ENCODE measurements at regions of chr3 and their contacts with region 1.

Region 1: DNA sequence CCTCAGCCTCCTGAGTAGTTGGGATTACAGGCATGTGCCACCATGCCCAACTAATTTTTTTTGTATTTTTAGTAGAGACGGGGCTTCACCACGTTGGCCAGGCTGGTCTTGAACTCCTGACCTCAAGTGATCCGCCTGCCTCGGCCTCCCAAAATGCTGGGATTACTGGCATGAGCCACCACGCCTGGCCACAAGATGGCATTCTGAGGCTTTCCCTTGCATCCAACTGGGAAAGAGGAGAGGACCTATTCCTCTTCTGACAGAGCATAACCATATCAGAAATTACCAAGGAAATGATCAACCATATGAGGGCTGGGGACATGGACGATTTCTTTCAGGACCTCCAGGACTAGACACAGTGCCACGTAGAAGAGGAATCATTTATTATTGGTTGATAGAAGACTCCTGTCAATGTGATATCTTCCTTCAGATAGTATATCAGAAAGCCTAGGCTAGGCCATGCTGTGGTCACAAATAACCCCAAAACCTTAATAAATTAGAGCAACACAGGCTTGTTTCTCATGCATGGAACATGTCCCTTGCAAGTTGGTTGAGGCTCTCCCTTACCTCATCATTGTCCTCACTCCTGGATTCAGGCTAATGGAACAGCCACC is 372.3 kb upstream of the IL12A start:
- DNase-seq: no peak
- H3K4me3 ChIP-seq: no peak overlapping the region
- H3K27ac ChIP-seq: no peak overlapping the region
- H3K4me1 ChIP-seq: peaks cover 0 to 9% (median 2%) of the 10 kb centered on the region in 4 donors
- H3K27me3 ChIP-seq: no peaks in the 10 kb centered on the region
- CTCF ChIP-seq: peak; percentile 62 to 78 (median 77)
- EP300 ChIP-seq: no peak
- POLR2A ChIP-seq: no peak

Region 2: DNA sequence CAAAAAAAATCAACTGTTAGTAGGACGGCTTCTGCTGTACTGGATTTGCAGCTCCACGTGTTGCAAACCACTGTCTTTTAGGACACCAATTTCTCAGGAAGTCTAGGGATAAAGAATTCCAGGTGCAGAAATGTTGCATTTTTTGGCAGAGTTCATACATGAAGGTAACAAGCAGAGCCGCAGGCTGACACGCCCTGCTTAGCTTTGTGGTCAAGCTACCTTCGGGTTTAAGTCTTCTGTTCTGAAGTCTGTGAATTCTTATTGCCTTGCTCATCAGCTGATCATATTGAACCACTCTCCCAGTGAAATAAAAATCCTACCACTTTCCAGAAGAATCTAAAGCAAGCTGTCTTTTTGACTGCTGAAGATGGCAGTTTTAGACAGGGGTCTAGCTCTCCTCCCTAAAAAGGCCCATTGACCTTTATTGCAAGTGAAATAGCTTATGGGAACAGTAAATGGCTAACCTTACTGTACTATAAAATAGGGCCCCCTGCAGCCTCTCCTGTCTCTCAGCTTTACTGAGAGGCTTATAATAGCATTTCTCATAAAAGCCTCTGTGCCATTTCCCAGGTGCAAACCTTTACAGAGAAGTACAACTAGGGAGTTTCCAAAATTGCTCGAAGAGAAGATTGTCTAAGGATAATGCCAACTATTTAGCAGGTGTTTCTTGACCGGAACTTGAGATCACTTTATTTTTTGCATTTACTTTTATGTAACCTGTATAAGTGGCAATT is 110.1 kb after region 1 on chr3:
- intact Hi-C with region 1: loop called (anchors 5 kb)
- DNase-seq: no peak
- H3K4me3 ChIP-seq: no peak overlapping the region
- H3K27ac ChIP-seq: no peak overlapping the region
- H3K4me1 ChIP-seq: peaks cover 0 to 4% (median under 1%) of the 10 kb centered on the region in 4 donors
- H3K27me3 ChIP-seq: no peaks in the 10 kb centered on the region
- CTCF ChIP-seq: no peak
- EP300 ChIP-seq: no peak
- POLR2A ChIP-seq: no peak

Region 3: GRCh38 chr3:159763602-159764489 is 147.5 kb after region 1 on chr3:
- intact Hi-C with region 1: loop called (anchors 5 kb)
- DNase-seq: no peak
- H3K4me3 ChIP-seq: peak overlapping the region; percentile 84 to 95 (median 84)
- H3K27ac ChIP-seq: peak overlapping the region; percentile 97 to 100 (median 98)
- H3K4me1 ChIP-seq: peaks cover 44 to 61% (median 58%) of the 10 kb centered on the region in 4 donors
- H3K27me3 ChIP-seq: no peaks in the 10 kb centered on the region
- CTCF ChIP-seq: peak in 2 of 3 experiments; percentile 22 to 49
- EP300 ChIP-seq: peak; percentile 23
- POLR2A ChIP-seq: no peak

Region 4: GRCh38 chr3:159804726-159805410 is 188.5 kb after region 1 on chr3:
- intact Hi-C with region 1: loop called (anchors 2 kb)
- DNase-seq: peak; percentile 92
- H3K4me3 ChIP-seq: peak overlapping the region in 2 of 4 donors; percentile 9 to 22
- H3K27ac ChIP-seq: peak overlapping the region; percentile 62 to 90 (median 84)
- H3K4me1 ChIP-seq: peaks cover 45 to 88% (median 85%) of the 10 kb centered on the region in 4 donors
- H3K27me3 ChIP-seq: no peaks in the 10 kb centered on the region
- CTCF ChIP-seq: peak; percentile 82 to 91 (median 89)
- EP300 ChIP-seq: peak; percentile 59
- POLR2A ChIP-seq: no peak

Region 5: DNA sequence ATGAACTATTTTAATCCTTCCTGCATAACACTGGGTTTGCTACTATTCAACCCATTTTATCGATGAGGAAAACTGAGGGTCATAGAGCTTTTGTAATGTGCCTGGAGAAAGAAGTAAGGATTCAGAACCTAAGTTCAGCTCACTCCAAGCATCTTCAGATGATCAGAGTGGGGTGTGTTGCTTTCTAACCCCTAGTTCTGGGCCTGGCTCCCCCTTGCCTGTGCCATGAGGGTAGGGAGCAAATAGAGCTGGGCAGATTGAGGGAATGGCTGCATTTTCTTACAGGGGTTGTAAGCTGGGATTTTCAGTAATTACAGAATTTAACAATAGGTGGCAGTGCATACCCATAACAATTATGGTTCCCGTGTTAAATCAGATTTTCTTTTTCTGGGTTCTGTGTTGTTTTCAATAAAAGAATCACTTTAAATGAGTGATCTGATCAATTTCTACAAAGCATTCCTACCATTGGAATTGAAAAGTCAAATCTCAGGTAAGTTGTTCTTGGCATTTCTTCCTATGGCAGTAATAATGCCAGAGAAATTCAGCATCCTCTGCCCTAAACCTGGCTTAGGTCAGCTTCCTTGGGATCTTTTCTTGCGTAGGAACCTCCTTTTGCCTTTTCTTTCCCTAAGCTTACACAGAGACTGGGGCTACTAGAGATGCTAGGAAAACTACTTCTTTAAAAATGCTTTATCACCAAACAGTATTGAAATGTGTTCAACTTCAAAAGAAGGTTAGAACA is 268.5 kb after region 1 on chr3:
- intact Hi-C with region 1: loop called (anchors 10 kb)
- DNase-seq: peak; percentile 37
- H3K4me3 ChIP-seq: no peak overlapping the region
- H3K27ac ChIP-seq: peak overlapping the region in 2 of 4 donors; percentile 2 to 25
- H3K4me1 ChIP-seq: peaks cover 58 to 78% (median 70%) of the 10 kb centered on the region in 4 donors
- H3K27me3 ChIP-seq: no peaks in the 10 kb centered on the region
- CTCF ChIP-seq: peak; percentile 44 to 61 (median 52)
- EP300 ChIP-seq: no peak
- POLR2A ChIP-seq: no peak

Measured in esophagus muscularis mucosa (tissue), 4 donors.